ENCODE measurements at regions of chr11 and their contacts with region 1.

Region 1: DNA sequence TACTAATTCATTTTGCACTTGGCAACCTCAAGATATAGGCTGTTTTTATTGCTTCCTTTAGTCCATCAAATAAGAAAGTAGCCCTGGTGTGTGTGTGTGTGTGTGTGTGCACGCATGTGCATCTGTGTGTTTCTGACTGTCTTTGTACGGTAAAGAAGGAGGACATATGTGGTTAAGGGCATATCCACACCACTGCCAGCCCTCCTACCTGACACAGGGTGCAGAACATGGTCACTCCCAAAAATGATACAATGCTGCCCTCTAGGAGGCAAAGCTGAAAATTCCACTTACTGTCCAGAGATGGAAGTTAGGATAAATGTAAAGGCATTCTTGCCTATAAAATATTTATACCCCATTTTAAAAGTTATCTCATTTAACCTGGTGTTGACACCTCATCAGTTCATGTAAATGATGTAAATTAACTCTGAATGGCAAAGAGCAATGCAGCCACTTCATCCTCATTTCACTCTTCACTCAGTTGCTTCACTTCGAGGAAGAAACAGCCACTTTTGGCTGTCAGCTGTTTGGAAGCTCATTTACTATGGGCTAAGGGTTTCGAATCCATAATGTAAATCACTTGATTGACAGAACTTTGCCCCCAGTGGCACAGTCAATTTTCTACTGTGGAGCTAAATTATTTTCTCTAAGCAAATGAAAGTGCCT is 83.1 kb upstream of the MTNR1B start:
- DNase-seq: peak; percentile 68 to 77
- H3K4me3 ChIP-seq: no peak overlapping the region
- H3K4me3 Mint-ChIP-seq: no peak overlapping the region
- H3K27ac Mint-ChIP-seq: no peak overlapping the region
- H3K4me1 ChIP-seq: no peaks in the 10 kb centered on the region
- H3K4me1 Mint-ChIP-seq: no peaks in the 10 kb centered on the region
- H3K27me3 ChIP-seq: no peaks in the 10 kb centered on the region
- H3K27me3 Mint-ChIP-seq: peaks cover 13% of the 10 kb centered on the region
- CTCF ChIP-seq: peak; percentile 85 to 89

Region 2: GRCh38 chr11:92460213-92460612 is 426.2 kb before region 1 on chr11:
- CTCF ChIA-PET with region 1: no interaction called
- POLR2A ChIA-PET with region 1: no interaction called
- intact Hi-C with region 1: no loop called
- DNase-seq: no peak
- H3K4me3 ChIP-seq: no peak overlapping the region
- H3K4me3 Mint-ChIP-seq: no peak overlapping the region
- H3K27ac Mint-ChIP-seq: no peak overlapping the region
- H3K4me1 ChIP-seq: no peaks in the 10 kb centered on the region
- H3K4me1 Mint-ChIP-seq: no peaks in the 10 kb centered on the region
- H3K27me3 ChIP-seq: no peaks in the 10 kb centered on the region
- H3K27me3 Mint-ChIP-seq: no peaks in the 10 kb centered on the region
- CTCF ChIP-seq: no peak

Region 3: DNA sequence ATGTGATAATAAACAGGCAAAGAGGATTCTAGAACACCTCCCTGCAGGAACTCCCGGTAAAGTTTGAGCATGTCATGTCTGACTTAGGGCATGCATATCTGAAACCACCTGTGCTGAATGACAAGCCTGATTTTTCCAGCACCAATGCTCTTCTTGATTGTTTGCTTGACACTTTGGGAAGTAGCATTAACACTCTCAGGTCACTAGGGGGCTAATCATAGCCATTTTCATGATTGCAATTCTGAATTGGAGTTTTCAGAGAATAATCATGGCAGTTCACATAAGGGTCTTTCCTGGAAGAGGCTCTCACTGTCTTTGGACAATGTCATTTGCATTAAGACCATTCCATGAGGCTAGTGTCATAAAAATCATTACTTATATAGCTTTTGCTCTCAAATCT is 151.3 kb before region 1 on chr11:
- CTCF ChIA-PET with region 1: no interaction called
- POLR2A ChIA-PET with region 1: no interaction called
- intact Hi-C with region 1: loop called (anchors 1 kb)
- DNase-seq: no peak
- H3K4me3 ChIP-seq: no peak overlapping the region
- H3K4me3 Mint-ChIP-seq: no peak overlapping the region
- H3K27ac Mint-ChIP-seq: no peak overlapping the region
- H3K4me1 ChIP-seq: no peaks in the 10 kb centered on the region
- H3K4me1 Mint-ChIP-seq: no peaks in the 10 kb centered on the region
- H3K27me3 ChIP-seq: no peaks in the 10 kb centered on the region
- H3K27me3 Mint-ChIP-seq: peaks cover 7% of the 10 kb centered on the region
- CTCF ChIP-seq: peak; percentile 39 to 48